ENCODE measurements at regions of chr5 and their contacts with region 1.

Region 1: DNA sequence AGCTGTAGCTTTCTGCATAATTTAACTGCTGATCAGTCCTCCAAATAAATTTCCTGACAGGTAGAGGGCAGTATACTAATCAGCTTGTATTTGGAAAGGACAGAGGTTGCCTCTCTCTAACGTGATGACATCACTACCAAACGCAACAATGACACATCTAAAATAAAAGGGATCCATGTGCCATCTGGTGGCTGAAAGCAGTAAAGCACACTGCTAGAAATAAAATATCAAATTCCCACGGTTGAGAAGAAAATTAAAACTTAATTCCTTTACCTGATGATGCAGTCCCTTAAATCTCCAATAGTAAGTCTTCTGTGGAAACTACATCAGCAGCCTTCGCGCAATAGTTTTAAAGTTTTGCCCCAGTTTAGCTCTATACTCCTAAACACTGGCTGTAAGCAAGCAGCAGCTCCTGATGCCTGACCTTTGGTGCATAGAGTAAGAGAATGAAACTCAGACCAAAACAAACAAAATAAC is 54.5 kb downstream of the DIAPH1 start:
- DNase-seq: no peak
- ATAC-seq: peak; percentile 98
- H3K4me3 Mint-ChIP-seq: no peak overlapping the region
- H3K27ac Mint-ChIP-seq: peak overlapping the region; percentile 80
- H3K4me1 Mint-ChIP-seq: peaks cover 7% of the 10 kb centered on the region
- H3K27me3 Mint-ChIP-seq: no peaks in the 10 kb centered on the region
- CTCF ChIP-seq: peak; percentile 92

Region 2: GRCh38 chr5:141208478-141208877 is 355.8 kb before region 1 on chr5 and contains the start of gene PCDHB12:
- CTCF ChIA-PET with region 1: interaction called, 3 read pairs
- POLR2A ChIA-PET with region 1: no interaction called
- intact Hi-C with region 1: loop called (anchors 1 kb)
- DNase-seq: no peak
- ATAC-seq: no peak
- H3K4me3 Mint-ChIP-seq: no peak within 1 kb of the TSS
- H3K27ac Mint-ChIP-seq: no peak within 1 kb of the TSS
- H3K4me1 Mint-ChIP-seq: no peaks in the 10 kb centered on the region
- H3K27me3 Mint-ChIP-seq: peaks cover 36% of the 10 kb centered on the region
- CTCF ChIP-seq: no peak
- total RNA-seq, gene PCDHB12: not detected in 2 replicates

Region 3: DNA sequence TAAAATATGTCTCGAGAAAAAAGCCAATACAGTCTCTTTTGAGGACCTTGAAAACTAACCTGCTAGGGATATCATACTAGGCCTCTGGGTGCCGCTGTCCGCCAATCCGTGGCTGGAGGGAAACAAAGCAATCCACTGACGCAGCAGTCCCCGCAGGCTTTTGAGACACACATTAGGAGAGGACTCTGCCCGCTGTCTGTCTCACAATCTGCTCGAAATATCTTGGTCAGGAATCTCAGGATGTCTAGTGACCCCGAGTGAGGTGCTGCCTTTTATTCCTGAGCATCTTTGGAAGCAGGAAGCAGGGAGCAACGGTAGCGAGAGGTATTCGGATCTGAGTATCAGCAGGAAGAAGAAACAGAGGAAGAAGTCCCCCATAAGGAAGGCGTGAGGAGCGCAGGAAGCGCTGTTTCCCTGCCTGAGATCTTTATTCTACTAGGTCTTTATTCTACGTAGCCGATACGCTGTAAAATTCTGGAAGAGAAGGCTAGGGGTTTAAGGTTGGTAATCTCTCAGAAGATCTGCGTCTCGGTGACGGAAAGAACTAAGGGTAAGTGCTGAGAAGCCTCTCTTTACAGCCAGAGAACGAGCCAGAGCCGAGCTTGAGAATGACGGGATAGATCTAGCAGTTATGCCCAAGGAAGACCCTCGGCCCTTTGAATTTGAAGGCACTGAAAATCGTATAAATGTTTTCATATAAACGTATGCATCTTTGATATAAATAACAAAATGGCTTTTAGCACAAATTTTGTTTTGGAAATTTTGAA is 238.0 kb before region 1 on chr5:
- CTCF ChIA-PET with region 1: interaction called, 17 read pairs
- POLR2A ChIA-PET with region 1: no interaction called
- intact Hi-C with region 1: loop called (anchors 1 kb)
- DNase-seq: peak; percentile 41
- ATAC-seq: peak; percentile 90
- H3K4me3 Mint-ChIP-seq: peak overlapping the region; percentile 91
- H3K27ac Mint-ChIP-seq: peak overlapping the region; percentile 84
- H3K4me1 Mint-ChIP-seq: peaks cover 10% of the 10 kb centered on the region
- H3K27me3 Mint-ChIP-seq: peaks cover 35% of the 10 kb centered on the region
- CTCF ChIP-seq: no peak

Region 4: GRCh38 chr5:141412854-141413539 is 151.3 kb before region 1 on chr5 and contains the start of gene PCDHGA10:
- CTCF ChIA-PET with region 1: interaction called, 38 read pairs
- POLR2A ChIA-PET with region 1: interaction called, 3 read pairs
- intact Hi-C with region 1: loop called (anchors 1 kb)
- DNase-seq: no peak
- ATAC-seq: peak; percentile 66
- H3K4me3 Mint-ChIP-seq: peak within 1 kb of the TSS; percentile 86
- H3K27ac Mint-ChIP-seq: peak within 1 kb of the TSS; percentile 41
- H3K4me1 Mint-ChIP-seq: peaks cover 21% of the 10 kb centered on the region
- H3K27me3 Mint-ChIP-seq: peaks cover 52% of the 10 kb centered on the region
- CTCF ChIP-seq: no peak
- total RNA-seq, gene PCDHGA10: 1.2 and 1.3 TPM in 2 replicates

Region 5: DNA sequence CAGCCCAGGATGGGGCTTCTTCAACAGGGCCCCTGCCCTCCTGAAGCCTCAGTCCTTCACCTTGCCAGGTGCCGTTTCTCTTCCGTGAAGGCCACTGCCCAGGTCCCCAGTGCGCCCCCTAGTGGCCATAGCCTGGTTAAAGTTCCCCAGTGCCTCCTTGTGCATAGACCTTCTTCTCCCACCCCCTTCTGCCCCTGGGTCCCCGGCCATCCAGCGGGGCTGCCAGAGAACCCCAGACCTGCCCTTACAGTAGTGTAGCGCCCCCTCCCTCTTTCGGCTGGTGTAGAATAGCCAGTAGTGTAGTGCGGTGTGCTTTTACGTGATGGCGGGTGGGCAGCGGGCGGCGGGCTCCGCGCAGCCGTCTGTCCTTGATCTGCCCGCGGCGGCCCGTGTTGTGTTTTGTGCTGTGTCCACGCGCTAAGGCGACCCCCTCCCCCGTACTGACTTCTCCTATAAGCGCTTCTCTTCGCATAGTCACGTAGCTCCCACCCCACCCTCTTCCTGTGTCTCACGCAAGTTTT is 51.8 kb before region 1 on chr5:
- CTCF ChIA-PET with region 1: interaction called, 14 read pairs
- POLR2A ChIA-PET with region 1: no interaction called
- intact Hi-C with region 1: no loop called
- DNase-seq: peak; percentile 66
- ATAC-seq: no peak
- H3K4me3 Mint-ChIP-seq: peak overlapping the region; percentile 85
- H3K27ac Mint-ChIP-seq: peak overlapping the region; percentile 20
- H3K4me1 Mint-ChIP-seq: peaks cover 84% of the 10 kb centered on the region
- H3K27me3 Mint-ChIP-seq: no peaks in the 10 kb centered on the region
- CTCF ChIP-seq: peak; percentile 37